Caco-2 (cell line): ENCODE measurements at regions of chr18 and their contacts with region 1.

Region 1: DNA sequence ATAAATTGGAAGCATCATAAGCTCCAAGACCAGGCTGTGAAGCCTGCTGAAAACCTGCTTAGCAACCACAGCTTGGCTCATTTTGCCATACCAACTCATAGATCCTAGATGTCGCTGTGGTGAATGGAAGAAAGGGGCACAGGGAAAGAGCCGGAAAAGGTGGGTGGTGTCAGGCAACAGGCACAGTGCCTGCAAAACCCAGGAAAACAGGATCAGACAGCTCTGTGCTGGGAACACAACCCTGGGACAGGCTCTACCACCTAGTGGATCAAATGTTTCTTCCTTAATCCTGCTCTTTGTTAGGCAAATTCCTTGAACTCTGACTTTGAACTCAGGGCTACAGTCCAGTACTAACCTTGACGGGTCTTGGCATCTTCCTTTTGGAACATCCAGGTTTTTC is 31.6 kb downstream of the TWSG1 start:
- DNase-seq: peak in 1 of 2 experiments; percentile 15
- H3K4me3 ChIP-seq: no peak overlapping the region
- H3K4me3 Mint-ChIP-seq: no peak overlapping the region
- H3K27ac Mint-ChIP-seq: no peak overlapping the region
- H3K4me1 ChIP-seq: peaks cover 35% of the 10 kb centered on the region
- H3K4me1 Mint-ChIP-seq: peaks cover 22% of the 10 kb centered on the region
- H3K27me3 ChIP-seq: no peaks in the 10 kb centered on the region
- H3K27me3 Mint-ChIP-seq: no peaks in the 10 kb centered on the region
- CTCF ChIP-seq: no peak

Region 2: DNA sequence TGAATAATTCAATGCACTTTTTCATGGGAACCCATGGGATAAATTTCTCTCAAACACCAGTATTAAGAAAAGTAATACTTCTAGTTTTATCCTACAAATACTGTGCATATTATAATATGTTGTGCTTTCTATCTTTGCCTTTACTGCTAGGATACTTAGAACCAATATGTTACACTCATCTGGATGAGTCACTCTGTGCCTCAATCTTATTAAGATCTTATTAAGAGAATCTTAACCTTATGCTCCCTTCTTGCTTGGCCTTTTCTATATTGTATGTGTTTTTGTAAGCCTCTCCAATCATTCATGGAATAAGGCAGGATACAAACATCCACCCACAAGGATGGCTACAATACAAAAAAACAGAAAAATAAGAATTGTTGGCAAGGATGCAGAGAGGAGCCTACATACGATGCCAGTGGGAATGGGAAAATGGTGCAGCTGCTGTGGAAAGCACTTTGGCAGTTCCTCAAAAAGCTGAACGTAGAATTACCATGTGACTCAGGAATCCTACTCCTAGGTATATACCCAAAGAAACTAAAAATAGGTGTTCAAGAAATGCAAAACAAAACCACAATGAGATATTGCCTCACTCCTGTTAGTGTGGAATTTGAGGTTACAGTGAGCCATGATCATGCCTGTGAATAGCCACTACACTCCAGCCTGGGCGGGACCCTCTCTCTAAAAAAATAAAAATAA is 42.3 kb before region 1 on chr18:
- CTCF ChIA-PET with region 1: no interaction called
- POLR2A ChIA-PET with region 1: no interaction called
- intact Hi-C with region 1: no loop called
- DNase-seq: no peak
- H3K4me3 ChIP-seq: no peak overlapping the region
- H3K4me3 Mint-ChIP-seq: no peak overlapping the region
- H3K27ac Mint-ChIP-seq: no peak overlapping the region
- H3K4me1 ChIP-seq: peaks cover 16% of the 10 kb centered on the region
- H3K4me1 Mint-ChIP-seq: peaks cover 19% of the 10 kb centered on the region
- H3K27me3 ChIP-seq: no peaks in the 10 kb centered on the region
- H3K27me3 Mint-ChIP-seq: no peaks in the 10 kb centered on the region
- CTCF ChIP-seq: no peak

Region 3: DNA sequence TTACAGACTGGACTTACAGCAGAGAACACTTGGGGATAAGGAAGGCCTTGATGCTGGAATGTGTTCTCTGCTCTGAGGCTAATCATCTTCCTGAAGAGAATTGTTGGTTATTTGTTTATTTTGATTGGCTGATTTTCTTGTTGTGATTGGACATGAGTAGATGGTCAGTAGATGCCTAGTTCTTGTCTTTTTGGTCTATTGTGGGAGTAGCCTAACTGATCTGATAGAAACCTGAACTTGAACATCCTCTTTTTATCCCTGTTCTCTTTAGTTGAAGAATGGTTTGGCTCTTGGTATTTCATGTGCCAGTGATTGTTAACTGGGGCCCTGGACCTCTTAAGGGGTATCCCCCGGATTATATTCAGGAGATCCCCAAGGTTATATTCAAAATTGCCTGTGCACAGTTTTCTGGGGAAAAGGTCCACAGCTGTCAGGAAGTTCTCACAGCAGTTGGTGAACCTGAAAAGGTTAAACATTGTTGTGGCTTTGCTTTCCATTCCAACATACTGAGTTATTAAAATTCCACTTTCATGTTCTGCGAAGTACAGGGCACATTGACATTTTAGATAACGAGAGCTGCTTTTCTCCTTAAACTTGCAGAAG is 18.0 kb before region 1 on chr18:
- CTCF ChIA-PET with region 1: interaction called, 3 read pairs
- POLR2A ChIA-PET with region 1: no interaction called
- intact Hi-C with region 1: loop called (anchors 1 kb)
- DNase-seq: no peak
- H3K4me3 ChIP-seq: no peak overlapping the region
- H3K4me3 Mint-ChIP-seq: no peak overlapping the region
- H3K27ac Mint-ChIP-seq: no peak overlapping the region
- H3K4me1 ChIP-seq: 0 out of 2 replicates have a peak, but pooled peaks cover 7% of the 10 kb centered on the region
- H3K4me1 Mint-ChIP-seq: peaks cover 8% of the 10 kb centered on the region
- H3K27me3 ChIP-seq: no peaks in the 10 kb centered on the region
- H3K27me3 Mint-ChIP-seq: no peaks in the 10 kb centered on the region
- CTCF ChIP-seq: no peak

Region 4: GRCh38 chr18:9428301-9428706 is 62.1 kb after region 1 on chr18:
- CTCF ChIA-PET with region 1: no interaction called
- POLR2A ChIA-PET with region 1: no interaction called
- intact Hi-C with region 1: no loop called
- DNase-seq: no peak
- H3K4me3 ChIP-seq: no peak overlapping the region
- H3K4me3 Mint-ChIP-seq: no peak overlapping the region
- H3K27ac Mint-ChIP-seq: no peak overlapping the region
- H3K4me1 ChIP-seq: no peaks in the 10 kb centered on the region
- H3K4me1 Mint-ChIP-seq: no peaks in the 10 kb centered on the region
- H3K27me3 ChIP-seq: no peaks in the 10 kb centered on the region
- H3K27me3 Mint-ChIP-seq: no peaks in the 10 kb centered on the region
- CTCF ChIP-seq: no peak